ENCODE measurements at regions of chr17 and their contacts with region 1.

Region 1: DNA sequence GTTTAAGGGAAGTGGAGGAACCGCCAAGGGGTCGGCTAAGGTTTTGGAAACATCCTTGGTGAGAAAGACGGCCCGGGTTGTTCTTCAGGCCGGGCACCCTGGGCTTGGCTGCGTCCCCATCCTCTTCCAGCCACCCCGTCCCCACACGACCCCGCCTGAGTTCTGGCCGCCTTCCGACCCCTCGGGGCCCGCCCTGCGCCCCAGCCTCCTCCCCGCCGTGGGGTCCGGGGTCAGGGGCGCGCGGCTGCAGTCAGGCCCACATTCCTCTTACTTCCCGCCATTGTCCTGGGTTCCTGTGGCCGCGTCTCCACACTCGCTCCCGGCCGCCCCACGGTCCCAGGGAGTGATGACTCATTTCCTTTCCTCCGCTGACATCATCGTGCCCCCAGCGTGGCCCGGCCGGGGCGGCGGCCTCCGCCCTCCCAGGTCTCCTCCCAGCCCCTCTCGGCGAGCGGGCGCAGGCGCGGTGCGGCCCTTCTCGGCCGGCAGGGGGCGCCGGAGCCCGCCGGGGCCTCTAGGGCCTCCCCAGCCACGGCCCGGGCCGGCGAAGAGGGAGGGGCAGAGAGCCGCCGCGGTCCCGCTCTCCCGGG is 59.6 kb downstream of the WSB1 start:
- DNase-seq: peak; percentile 97
- H3K4me3 ChIP-seq: peak overlapping the region; percentile 20 to 72 (median 49)
- H3K27ac ChIP-seq: peak overlapping the region; percentile 82 to 92 (median 90)
- H3K4me1 ChIP-seq: peaks cover 16 to 49% (median 27%) of the 10 kb centered on the region in 6 donors
- H3K27me3 ChIP-seq: no peaks in the 10 kb centered on the region
- CTCF ChIP-seq: peak; percentile 45 to 99 (median 98)
- POLR2A ChIP-seq: peak in 2 of 3 donors; percentile 31 to 61

Region 2: DNA sequence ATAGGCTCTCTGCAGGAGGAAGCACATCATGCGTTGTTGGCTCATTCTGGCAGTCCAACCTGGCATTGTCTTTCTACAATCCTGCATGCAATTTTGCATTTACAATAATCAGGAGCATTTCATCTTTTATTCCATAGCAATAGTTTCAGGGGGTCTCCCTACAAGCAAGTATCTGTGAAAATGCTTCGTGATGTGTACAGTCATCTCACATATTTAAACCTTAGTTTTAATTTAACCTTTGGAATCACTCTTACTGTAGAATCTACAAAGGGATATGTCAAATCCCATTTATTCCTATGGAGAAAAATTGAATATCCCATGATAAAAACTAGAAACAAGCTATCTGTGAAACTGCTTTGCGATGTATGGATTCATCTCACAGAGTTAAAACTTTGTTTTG is 171.6 kb before region 1 on chr17:
- intact Hi-C with region 1: no loop called
- DNase-seq: no peak
- H3K4me3 ChIP-seq: no peak overlapping the region
- H3K27ac ChIP-seq: no peak overlapping the region
- H3K4me1 ChIP-seq: no peaks in the 10 kb centered on the region
- H3K27me3 ChIP-seq: no peaks in the 10 kb centered on the region
- CTCF ChIP-seq: no peak
- POLR2A ChIP-seq: no peak

Region 3: DNA sequence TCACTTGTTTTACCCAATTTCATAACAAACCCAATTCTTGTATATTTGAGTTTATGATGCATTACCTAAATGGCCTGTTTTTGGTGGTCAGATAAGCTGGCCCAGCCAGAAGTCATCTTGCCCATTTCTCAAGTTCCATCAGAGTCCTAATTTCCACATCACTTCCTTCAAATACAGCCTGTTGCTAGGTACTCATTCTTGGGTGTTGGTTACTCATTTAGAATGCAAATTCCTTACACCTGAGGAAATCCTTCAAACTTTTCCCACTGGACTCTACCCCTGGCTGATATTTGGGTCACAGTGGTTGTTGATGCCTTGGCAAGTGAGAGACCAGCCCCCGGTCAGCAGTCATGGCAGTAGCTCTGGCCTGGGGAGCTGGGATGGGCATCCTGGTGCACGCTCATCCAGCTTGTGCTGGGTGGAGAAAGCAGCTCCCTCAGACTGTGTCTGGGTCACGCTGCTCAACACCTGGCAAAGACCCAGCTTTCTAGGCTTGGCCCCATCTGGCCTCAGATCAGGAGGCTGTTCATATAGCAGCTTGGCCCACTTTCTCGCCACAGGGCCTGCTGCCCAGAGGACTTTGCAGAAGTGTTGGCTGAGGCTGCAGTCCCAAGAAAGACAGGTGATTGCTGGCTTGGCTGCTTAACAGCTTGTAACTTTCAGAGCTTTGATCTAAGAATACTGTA is 33.9 kb before region 1 on chr17:
- intact Hi-C with region 1: no loop called
- DNase-seq: no peak
- H3K4me3 ChIP-seq: no peak overlapping the region
- H3K27ac ChIP-seq: peak overlapping the region in 5 of 8 donors; percentile 8 to 45 (median 20)
- H3K4me1 ChIP-seq: peaks cover 6 to 36% (median 21%) of the 10 kb centered on the region in 6 donors
- H3K27me3 ChIP-seq: no peaks in the 10 kb centered on the region
- CTCF ChIP-seq: no peak
- POLR2A ChIP-seq: no peak

Region 4: GRCh38 chr17:27455914-27456680 is 102.5 kb after region 1 on chr17 and contains the start of gene KSR1:
- intact Hi-C with region 1: loop called (anchors 10 kb)
- DNase-seq: peak; percentile 97
- H3K4me3 ChIP-seq: peak within 1 kb of the TSS; percentile 75 to 96 (median 84)
- H3K27ac ChIP-seq: peak within 1 kb of the TSS; percentile 57 to 88 (median 83)
- H3K4me1 ChIP-seq: peaks cover 6 to 50% (median 34%) of the 10 kb centered on the region in 6 donors
- H3K27me3 ChIP-seq: no peaks in the 10 kb centered on the region
- CTCF ChIP-seq: peak in 8 of 11 experiments; percentile 32 to 68 (median 45)
- POLR2A ChIP-seq: peak in 1 of 3 donors; percentile 72
- total RNA-seq, gene KSR1: 35.2 to 100 (median 58.7) TPM

Measured in spleen (tissue), 13 donors.